T-cell (primary cell): ENCODE measurements at regions of chr11 and their contacts with region 1.

Region 1: DNA sequence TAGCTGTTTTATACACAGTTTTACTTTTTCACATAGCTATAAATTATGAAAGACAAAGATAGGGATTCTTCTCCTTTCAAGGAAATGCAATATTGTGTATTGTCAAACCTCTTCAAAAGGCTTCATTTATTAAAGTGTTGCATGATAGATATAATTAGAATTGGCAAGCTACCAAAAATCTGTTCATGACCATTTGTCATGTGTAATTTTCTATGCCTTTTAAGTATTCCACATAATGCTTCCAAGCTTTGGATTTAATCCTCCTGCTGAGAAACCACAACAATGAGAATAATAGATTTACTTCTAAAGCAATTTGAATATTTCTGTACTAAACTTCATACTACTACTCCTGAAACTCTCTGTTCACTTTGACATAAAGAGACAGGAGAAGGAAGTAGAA is 403.2 kb upstream of the CCDC179 start:
- DNase-seq: no peak
- ATAC-seq: no peak
- H3K4me3 ChIP-seq: no peak overlapping the region
- H3K4me3 Mint-ChIP-seq: no peak overlapping the region
- H3K27ac ChIP-seq: no peak overlapping the region
- H3K27ac Mint-ChIP-seq: no peak overlapping the region
- H3K4me1 ChIP-seq: no peaks in the 10 kb centered on the region
- H3K4me1 Mint-ChIP-seq: no peaks in the 10 kb centered on the region
- H3K27me3 ChIP-seq: no peaks in the 10 kb centered on the region
- H3K27me3 Mint-ChIP-seq: no peaks in the 10 kb centered on the region

Region 2: GRCh38 chr11:24406389-24406788 is 1142.9 kb after region 1 on chr11:
- CTCF ChIA-PET with region 1: no interaction called
- POLR2A ChIA-PET with region 1: no interaction called
- DNase-seq: no peak
- ATAC-seq: no peak
- H3K4me3 ChIP-seq: no peak overlapping the region
- H3K4me3 Mint-ChIP-seq: no peak overlapping the region
- H3K27ac ChIP-seq: no peak overlapping the region
- H3K27ac Mint-ChIP-seq: no peak overlapping the region
- H3K4me1 ChIP-seq: no peaks in the 10 kb centered on the region
- H3K4me1 Mint-ChIP-seq: no peaks in the 10 kb centered on the region
- H3K27me3 ChIP-seq: no peaks in the 10 kb centered on the region
- H3K27me3 Mint-ChIP-seq: no peaks in the 10 kb centered on the region

Region 3: DNA sequence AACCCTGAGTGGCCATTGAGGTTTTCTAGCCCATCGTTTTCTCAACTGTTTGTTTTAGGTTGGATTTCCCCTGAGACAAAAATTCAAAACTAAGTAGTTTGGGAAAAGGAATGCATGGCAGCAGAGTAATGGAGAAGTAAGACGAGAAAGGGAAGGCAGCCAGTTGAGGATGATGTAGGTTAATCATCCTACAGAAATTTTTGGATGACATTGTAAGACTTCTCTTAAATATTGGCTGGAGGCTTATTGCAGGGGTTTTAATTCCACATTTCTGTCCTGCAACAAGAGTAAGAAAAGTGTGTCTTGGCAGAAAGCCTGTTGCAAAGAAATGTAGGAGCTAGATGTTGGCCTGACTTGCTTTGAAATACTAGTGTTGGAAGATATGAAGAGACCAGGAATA is 1542.2 kb after region 1 on chr11:
- CTCF ChIA-PET with region 1: interaction called in 1 of 2 experiments, 10 read pairs
- POLR2A ChIA-PET with region 1: no interaction called
- DNase-seq: no peak
- ATAC-seq: no peak
- H3K4me3 ChIP-seq: no peak overlapping the region
- H3K4me3 Mint-ChIP-seq: no peak overlapping the region
- H3K27ac ChIP-seq: no peak overlapping the region
- H3K27ac Mint-ChIP-seq: no peak overlapping the region
- H3K4me1 ChIP-seq: no peaks in the 10 kb centered on the region
- H3K4me1 Mint-ChIP-seq: no peaks in the 10 kb centered on the region
- H3K27me3 ChIP-seq: no peaks in the 10 kb centered on the region
- H3K27me3 Mint-ChIP-seq: no peaks in the 10 kb centered on the region